K562 (cell line): ENCODE measurements at regions of chr2 and their contacts with region 1.

Region 1: GRCh38 chr2:157327621-157328500 is 2.2 kb upstream of the ERMN start:
- DNase-seq: peak; percentile 86 to 91 (median 90)
- ATAC-seq: peak; percentile 94
- H3K4me3 ChIP-seq: no peak overlapping the region
- H3K27ac ChIP-seq: no peak overlapping the region
- H3K4me1 ChIP-seq: peaks cover 0 to 22% of the 10 kb centered on the region in 2 experiments; a peak in 3 of 5 replicates
- H3K27me3 ChIP-seq: no peaks in the 10 kb centered on the region
- CTCF ChIP-seq: peak; percentile 93 to 99 (median 94)
- EP300 ChIP-seq: no peak
- POLR2A ChIP-seq: no peak
- RAD21 ChIP-seq: peak; percentile 78 to 87

Region 2: DNA sequence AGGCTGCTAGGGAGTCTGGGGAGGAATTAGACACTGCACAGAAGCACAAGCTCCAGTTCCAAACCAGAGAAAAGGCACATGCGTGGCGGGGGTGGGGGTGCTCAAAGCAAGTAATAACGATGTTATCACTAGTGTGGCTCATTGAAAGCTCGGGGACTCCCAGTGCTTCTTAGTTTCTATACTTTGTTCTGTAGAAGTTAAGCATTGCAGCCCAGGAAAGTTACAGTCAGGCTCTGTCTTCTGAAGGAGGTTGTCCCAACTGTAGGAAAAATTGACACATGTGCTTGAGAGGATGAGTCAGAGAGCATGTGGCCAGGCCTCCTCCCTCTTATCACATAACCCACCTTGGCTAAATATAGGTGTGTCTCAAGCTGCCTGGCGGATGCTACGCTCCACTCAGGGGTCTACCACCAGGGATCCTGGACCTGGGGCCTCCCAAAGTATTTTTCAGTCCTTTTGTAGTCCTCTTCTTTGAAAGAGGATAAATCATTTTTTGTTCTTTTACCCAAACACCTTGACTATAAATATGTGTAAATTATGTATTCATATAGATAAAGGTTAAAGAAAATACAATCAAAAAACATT is 66.6 kb before region 1 on chr2:
- CTCF ChIA-PET with region 1: no interaction called
- POLR2A ChIA-PET with region 1: interaction called, 6 read pairs
- in situ Hi-C with region 1: no loop called
- intact Hi-C with region 1: loop called (anchors 1 kb)
- DNase-seq: peak; percentile 96 to 99 (median 98)
- ATAC-seq: peak; percentile 64
- H3K4me3 ChIP-seq: peak overlapping the region; percentile 53
- H3K27ac ChIP-seq: peak overlapping the region; percentile 94
- H3K4me1 ChIP-seq: peaks cover 7 to 37% of the 10 kb centered on the region in 2 experiments; a peak in 4 of 5 replicates
- H3K27me3 ChIP-seq: no peaks in the 10 kb centered on the region
- CTCF ChIP-seq: no peak
- EP300 ChIP-seq: peak; percentile 98
- POLR2A ChIP-seq: peak; percentile 90
- RAD21 ChIP-seq: peak; percentile 16 to 41; a peak in 3 of 4 replicates

Region 3: DNA sequence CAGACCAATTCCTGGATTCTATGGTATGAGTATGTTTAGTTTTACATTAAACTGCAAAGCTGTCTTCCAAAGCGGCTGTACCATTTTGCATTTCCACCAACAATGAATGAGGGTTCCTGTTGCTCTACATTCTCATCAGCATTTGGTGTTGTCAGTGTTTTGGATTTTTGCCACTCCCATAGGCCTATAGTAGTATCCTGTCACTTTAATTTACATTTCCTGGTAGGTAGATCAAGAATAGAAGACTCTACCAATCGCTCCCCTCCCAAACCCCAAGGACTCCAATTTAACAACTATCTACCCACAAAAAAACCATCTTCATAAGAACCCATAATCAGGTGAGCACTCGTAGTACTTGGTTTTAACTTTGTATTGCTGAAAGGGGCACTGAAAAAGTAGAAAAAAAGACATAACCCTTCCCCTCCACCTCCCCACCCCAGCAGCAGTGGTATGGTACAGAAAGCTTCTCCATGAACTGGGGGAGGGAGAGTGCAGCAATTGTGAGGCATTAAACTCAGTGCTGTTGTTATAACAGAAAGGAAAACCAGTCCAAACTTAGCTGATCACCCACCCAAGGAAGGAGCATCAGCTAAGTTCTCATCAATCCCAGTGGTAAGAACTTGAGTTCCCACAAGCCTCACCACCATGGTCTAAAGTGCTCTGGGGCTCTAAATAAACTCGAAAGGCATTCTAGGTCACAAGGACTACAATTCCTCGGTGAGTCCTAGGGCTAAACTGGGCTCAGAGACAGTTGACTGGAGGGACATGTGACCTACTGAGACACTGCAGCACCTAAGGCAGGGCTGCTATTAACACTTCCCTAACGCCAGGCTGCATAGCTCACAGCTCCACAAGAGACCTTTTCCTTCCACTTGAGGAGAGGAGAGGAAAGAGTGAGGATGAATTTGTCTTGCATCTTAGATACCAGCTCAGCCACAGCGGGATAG is 151.5 kb after region 1 on chr2:
- CTCF ChIA-PET with region 1: no interaction called
- POLR2A ChIA-PET with region 1: no interaction called
- in situ Hi-C with region 1: no loop called
- intact Hi-C with region 1: loop called (anchors 5 kb)
- DNase-seq: no peak
- ATAC-seq: peak; percentile 60
- H3K4me3 ChIP-seq: no peak overlapping the region
- H3K27ac ChIP-seq: no peak overlapping the region
- H3K4me1 ChIP-seq: peaks cover 0 to 22% of the 10 kb centered on the region in 2 experiments; a peak in 3 of 5 replicates
- H3K27me3 ChIP-seq: no peaks in the 10 kb centered on the region
- CTCF ChIP-seq: no peak
- EP300 ChIP-seq: no peak
- POLR2A ChIP-seq: no peak
- RAD21 ChIP-seq: no peak

Region 4: DNA sequence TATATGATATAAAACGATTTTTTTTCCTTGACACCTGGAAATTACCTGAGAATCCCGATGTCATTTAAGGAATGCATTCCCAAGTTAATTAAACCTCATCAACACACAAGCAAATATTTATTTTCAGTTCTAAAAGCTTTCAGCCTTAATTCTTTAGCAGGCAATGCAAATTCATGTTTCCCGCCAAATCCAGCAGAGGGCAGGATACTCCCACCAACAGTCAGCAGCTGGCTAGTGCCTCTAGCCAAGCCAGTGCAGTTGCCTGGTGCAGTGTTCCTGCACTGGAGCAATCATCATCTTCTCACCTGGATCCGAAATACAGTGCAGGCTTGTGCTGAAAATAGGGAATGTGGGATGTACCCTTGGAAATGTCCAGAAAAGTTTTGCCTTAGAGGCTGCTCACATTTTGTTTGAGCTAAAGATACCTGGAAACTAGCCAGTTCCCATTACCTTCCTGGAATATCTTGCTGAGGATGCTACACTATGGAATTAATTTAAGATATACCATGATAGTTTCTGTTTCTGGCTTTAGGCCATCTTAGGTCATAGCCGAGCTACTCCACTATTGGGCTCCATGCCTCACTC is 164.4 kb after region 1 on chr2:
- CTCF ChIA-PET with region 1: no interaction called
- POLR2A ChIA-PET with region 1: no interaction called
- in situ Hi-C with region 1: no loop called
- intact Hi-C with region 1: loop called (anchors 5 kb)
- DNase-seq: peak; percentile 29 to 78 (median 54)
- ATAC-seq: peak; percentile 98
- H3K4me3 ChIP-seq: no peak overlapping the region
- H3K27ac ChIP-seq: no peak overlapping the region
- H3K4me1 ChIP-seq: no peaks in the 10 kb centered on the region
- H3K27me3 ChIP-seq: peaks cover 0 to 4% of the 10 kb centered on the region in 2 experiments; a peak in 1 of 5 replicates
- CTCF ChIP-seq: peak; percentile 84 to 94 (median 87)
- EP300 ChIP-seq: no peak
- POLR2A ChIP-seq: no peak
- RAD21 ChIP-seq: peak; percentile 92 to 96

Region 5: GRCh38 chr2:157929871-157930667 is 602.2 kb after region 1 on chr2:
- CTCF ChIA-PET with region 1: no interaction called
- POLR2A ChIA-PET with region 1: no interaction called
- in situ Hi-C with region 1: no loop called
- intact Hi-C with region 1: loop called (anchors 2 kb)
- DNase-seq: peak; percentile 41 to 93 (median 58)
- ATAC-seq: peak; percentile 93
- H3K4me3 ChIP-seq: no peak overlapping the region
- H3K27ac ChIP-seq: peak overlapping the region; percentile 80
- H3K4me1 ChIP-seq: peaks cover 10 to 82% of the 10 kb centered on the region in 2 experiments
- H3K27me3 ChIP-seq: no peaks in the 10 kb centered on the region
- CTCF ChIP-seq: no peak; a peak in 1 of 6 replicates
- EP300 ChIP-seq: peak; percentile 100
- POLR2A ChIP-seq: no peak
- RAD21 ChIP-seq: peak; percentile 44 to 54; a peak in 3 of 4 replicates

Region 6: GRCh38 chr2:158024288-158024898 is 696.5 kb after region 1 on chr2:
- CTCF ChIA-PET with region 1: no interaction called
- POLR2A ChIA-PET with region 1: no interaction called
- in situ Hi-C with region 1: loop called (anchors 25 kb)
- intact Hi-C with region 1: no loop called
- DNase-seq: peak; percentile 56 to 78 (median 64)
- ATAC-seq: peak; percentile 90
- H3K4me3 ChIP-seq: no peak overlapping the region
- H3K27ac ChIP-seq: no peak overlapping the region
- H3K4me1 ChIP-seq: peaks cover 0 to 4% of the 10 kb centered on the region in 2 experiments; a peak in 1 of 5 replicates
- H3K27me3 ChIP-seq: peaks cover 2 to 6% of the 10 kb centered on the region in 2 experiments; a peak in 4 of 5 replicates
- CTCF ChIP-seq: peak; percentile 84 to 95 (median 91)
- EP300 ChIP-seq: no peak
- POLR2A ChIP-seq: no peak
- RAD21 ChIP-seq: peak; percentile 83 to 88